PC-3 (cell line): ENCODE measurements at regions of chr12 and their contacts with region 1.

Region 1: DNA sequence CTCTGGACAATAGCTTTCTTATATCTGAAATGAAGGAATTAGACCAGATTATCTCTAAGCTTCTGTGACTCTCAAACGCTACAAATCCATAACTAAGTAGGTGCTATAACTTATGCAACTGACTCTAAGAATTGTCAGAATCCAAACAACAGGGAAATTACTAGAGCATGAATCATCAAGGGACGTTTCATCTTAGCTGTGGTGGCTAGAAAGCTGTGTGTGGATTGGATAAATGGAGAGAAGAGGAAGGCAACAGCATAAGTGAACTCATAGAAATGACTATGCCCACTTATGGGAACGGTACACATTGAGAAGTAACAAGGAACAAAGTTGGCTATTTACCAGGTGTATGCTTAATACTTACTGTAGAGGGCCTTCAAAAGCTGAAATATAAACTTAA is 96.0 kb upstream of the NEDD1 start:
- DNase-seq: peak; percentile 99
- ATAC-seq: peak; percentile 86
- H3K4me3 ChIP-seq: peak overlapping the region; percentile 57
- H3K27ac ChIP-seq: peak overlapping the region; percentile 100
- H3K4me1 ChIP-seq: peaks cover 52% of the 10 kb centered on the region
- H3K27me3 ChIP-seq: no peaks in the 10 kb centered on the region
- CTCF ChIP-seq: peak; percentile 38; the same call in 1 of the 2 replicates

Region 2: DNA sequence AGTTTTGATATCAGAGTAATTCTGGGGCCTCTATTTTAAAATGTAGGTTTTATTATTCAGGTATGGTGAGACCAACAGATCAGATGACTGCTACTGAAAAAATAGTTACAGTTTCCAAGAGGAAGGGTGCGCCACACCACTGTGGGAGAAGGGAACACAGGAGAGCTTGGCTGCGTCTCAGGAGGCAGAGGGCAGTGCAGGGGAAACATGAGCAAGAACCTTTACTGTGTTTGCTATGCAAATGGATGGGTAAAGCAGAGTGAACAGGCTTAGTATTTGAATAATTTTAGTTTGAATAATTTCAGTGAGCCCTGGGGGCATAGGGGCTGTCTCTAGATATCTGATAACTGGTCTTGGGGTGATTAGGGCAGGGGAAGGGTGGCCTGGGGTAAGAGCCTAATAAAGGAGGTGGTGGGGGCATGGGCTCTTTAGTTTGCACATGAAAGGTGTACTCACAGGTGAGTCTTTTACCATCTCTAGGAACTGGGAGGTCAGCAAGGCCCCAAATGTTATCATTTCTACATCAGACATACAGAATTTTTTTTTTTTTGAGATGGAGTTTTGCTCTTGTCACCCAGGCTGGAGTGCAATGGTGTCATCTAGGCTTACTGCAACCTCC is 100.8 kb before region 1 on chr12:
- CTCF ChIA-PET with region 1: no interaction called
- POLR2A ChIA-PET with region 1: no interaction called
- intact Hi-C with region 1: loop called (anchors 1 kb)
- DNase-seq: peak; percentile 63
- ATAC-seq: peak; percentile 100
- H3K4me3 ChIP-seq: no peak overlapping the region
- H3K27ac ChIP-seq: no peak overlapping the region
- H3K4me1 ChIP-seq: no peaks in the 10 kb centered on the region
- H3K27me3 ChIP-seq: no peaks in the 10 kb centered on the region
- CTCF ChIP-seq: peak; percentile 54

Region 3: GRCh38 chr12:96719660-96720363 is 91.3 kb before region 1 on chr12:
- CTCF ChIA-PET with region 1: no interaction called
- POLR2A ChIA-PET with region 1: no interaction called
- intact Hi-C with region 1: loop called (anchors 2 kb)
- DNase-seq: peak; percentile 63
- ATAC-seq: peak; percentile 70
- H3K4me3 ChIP-seq: peak overlapping the region; percentile 73
- H3K27ac ChIP-seq: peak overlapping the region; percentile 10; the same call in 1 of the 2 replicates
- H3K4me1 ChIP-seq: peaks cover 10% of the 10 kb centered on the region; the same call in 1 of the 2 replicates
- H3K27me3 ChIP-seq: no peaks in the 10 kb centered on the region
- CTCF ChIP-seq: no peak

Region 4: GRCh38 chr12:96770219-96771102 is 40.6 kb before region 1 on chr12:
- CTCF ChIA-PET with region 1: interaction called, 5 read pairs
- POLR2A ChIA-PET with region 1: no interaction called
- intact Hi-C with region 1: loop called (anchors 1 kb)
- DNase-seq: peak; percentile 64
- ATAC-seq: peak; percentile 58
- H3K4me3 ChIP-seq: no peak overlapping the region
- H3K27ac ChIP-seq: peak overlapping the region; percentile 4
- H3K4me1 ChIP-seq: peaks cover 23% of the 10 kb centered on the region
- H3K27me3 ChIP-seq: no peaks in the 10 kb centered on the region
- CTCF ChIP-seq: no peak

Region 5: GRCh38 chr12:96828169-96828789 is 17.2 kb after region 1 on chr12:
- CTCF ChIA-PET with region 1: no interaction called
- POLR2A ChIA-PET with region 1: no interaction called
- intact Hi-C with region 1: no loop called
- DNase-seq: no peak
- ATAC-seq: no peak
- H3K4me3 ChIP-seq: no peak overlapping the region
- H3K27ac ChIP-seq: no peak overlapping the region
- H3K4me1 ChIP-seq: no peaks in the 10 kb centered on the region
- H3K27me3 ChIP-seq: no peaks in the 10 kb centered on the region
- CTCF ChIP-seq: 0 out of 2 replicates have a peak, but pooled peaks have one; percentile 18

Region 6: DNA sequence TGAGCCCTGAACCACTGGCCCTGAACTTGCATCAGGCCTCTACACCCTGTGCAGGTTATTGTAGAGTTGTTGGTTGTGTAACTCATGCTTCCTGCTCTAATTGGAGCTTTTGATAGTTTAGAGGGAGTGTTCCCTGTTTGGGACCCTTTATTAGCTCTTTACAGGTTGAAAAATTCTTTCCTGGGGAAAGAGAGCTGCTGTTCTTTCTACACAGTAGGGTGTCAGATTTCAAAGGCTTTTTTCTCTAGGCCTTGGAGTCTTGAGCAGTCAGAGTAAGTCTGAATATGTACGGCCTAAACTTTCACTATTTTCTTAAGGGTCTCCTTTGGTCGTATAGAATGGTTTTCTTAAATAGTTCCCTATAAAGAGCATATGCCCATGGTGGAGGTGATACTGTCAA is 35.2 kb after region 1 on chr12:
- CTCF ChIA-PET with region 1: no interaction called
- POLR2A ChIA-PET with region 1: no interaction called
- intact Hi-C with region 1: no loop called
- DNase-seq: peak; percentile 7
- ATAC-seq: peak; percentile 45
- H3K4me3 ChIP-seq: no peak overlapping the region
- H3K27ac ChIP-seq: no peak overlapping the region
- H3K4me1 ChIP-seq: no peaks in the 10 kb centered on the region
- H3K27me3 ChIP-seq: no peaks in the 10 kb centered on the region
- CTCF ChIP-seq: no peak

Region 7: GRCh38 chr12:96889273-96889933 is 78.3 kb after region 1 on chr12:
- CTCF ChIA-PET with region 1: no interaction called
- POLR2A ChIA-PET with region 1: no interaction called
- intact Hi-C with region 1: loop called (anchors 2 kb)
- DNase-seq: peak; percentile 90
- ATAC-seq: peak; percentile 99
- H3K4me3 ChIP-seq: peak overlapping the region; percentile 4; the same call in 1 of the 2 replicates
- H3K27ac ChIP-seq: peak overlapping the region; percentile 48
- H3K4me1 ChIP-seq: peaks cover 21% of the 10 kb centered on the region
- H3K27me3 ChIP-seq: no peaks in the 10 kb centered on the region
- CTCF ChIP-seq: no peak

Region 8: GRCh38 chr12:96906849-96907670 is 96.0 kb after region 1 on chr12 and contains the start of gene NEDD1:
- CTCF ChIA-PET with region 1: no interaction called
- POLR2A ChIA-PET with region 1: interaction called, 5 read pairs
- intact Hi-C with region 1: loop called (anchors 2 kb)
- DNase-seq: peak; percentile 82
- ATAC-seq: peak; percentile 88
- H3K4me3 ChIP-seq: peak within 1 kb of the TSS; percentile 91
- H3K27ac ChIP-seq: peak within 1 kb of the TSS; percentile 41
- H3K4me1 ChIP-seq: peaks cover 35% of the 10 kb centered on the region
- H3K27me3 ChIP-seq: no peaks in the 10 kb centered on the region
- CTCF ChIP-seq: no peak
- total RNA-seq, gene NEDD1: 28.6 and 43.4 TPM in 2 replicates

Region 9: GRCh38 chr12:97177481-97177880 is 366.4 kb after region 1 on chr12:
- CTCF ChIA-PET with region 1: no interaction called
- POLR2A ChIA-PET with region 1: no interaction called
- intact Hi-C with region 1: no loop called
- DNase-seq: peak; percentile 11
- ATAC-seq: no peak
- H3K4me3 ChIP-seq: no peak overlapping the region
- H3K27ac ChIP-seq: no peak overlapping the region
- H3K4me1 ChIP-seq: no peaks in the 10 kb centered on the region
- H3K27me3 ChIP-seq: peaks cover 25% of the 10 kb centered on the region; the same call in 1 of the 2 replicates
- CTCF ChIP-seq: no peak